Colonic mucosa (tissue), 4 donors: ENCODE measurements at regions of chr3 and their contacts with region 1.

Region 1: GRCh38 chr3:126083913-126084767 is at the start of gene SLC41A3:
- DNase-seq: peak; percentile 93
- H3K4me3 ChIP-seq: peak within 1 kb of the TSS; percentile 69
- H3K27ac ChIP-seq: peak within 1 kb of the TSS; percentile 83
- H3K4me1 ChIP-seq: peaks cover 12% of the 10 kb centered on the region
- H3K27me3 ChIP-seq: no peaks in the 10 kb centered on the region
- CTCF ChIP-seq: peak; percentile 36
- total RNA-seq, gene SLC41A3: 27.6 to 33.1 TPM

Region 2: GRCh38 chr3:125990253-125990970 is 93.7 kb before region 1 on chr3:
- intact Hi-C with region 1: loop called (anchors 10 kb)
- DNase-seq: peak; percentile 77
- H3K4me3 ChIP-seq: peak overlapping the region; percentile 55
- H3K27ac ChIP-seq: peak overlapping the region; percentile 54
- H3K4me1 ChIP-seq: no peaks in the 10 kb centered on the region
- H3K27me3 ChIP-seq: no peaks in the 10 kb centered on the region
- CTCF ChIP-seq: no peak